Left ventricle myocardium inferior (tissue), 1 donor: ENCODE measurements at regions of chrX and their contacts with region 1.

Region 1: DNA sequence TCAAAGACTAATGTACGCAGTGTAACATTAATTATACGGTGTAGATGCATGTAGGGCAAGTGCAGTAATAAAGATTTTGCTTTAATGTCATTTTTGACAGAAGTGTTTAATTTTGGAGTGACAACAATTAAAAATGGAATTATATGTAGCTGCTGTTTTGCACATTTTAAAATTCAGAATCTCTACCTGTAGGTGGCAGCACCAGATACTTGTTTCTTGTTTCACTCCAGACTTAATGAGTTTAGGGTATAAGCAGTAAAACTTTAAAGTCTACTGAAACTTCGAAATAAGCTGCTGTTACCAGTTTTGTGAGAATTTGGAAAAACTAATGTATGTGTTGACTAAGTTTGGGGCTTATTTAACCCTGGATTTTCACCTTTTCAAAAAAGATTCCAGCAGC is 144.9 kb downstream of the POLA1 start:
- DNase-seq: no peak
- H3K4me3 ChIP-seq: no peak overlapping the region
- H3K27ac ChIP-seq: no peak overlapping the region
- H3K4me1 ChIP-seq: no peaks in the 10 kb centered on the region
- H3K27me3 ChIP-seq: no peaks in the 10 kb centered on the region
- CTCF ChIP-seq: peak; percentile 56

Region 2: GRCh38 chrX:25144043-25144940 is 305.7 kb after region 1 on chrX:
- intact Hi-C with region 1: loop called (anchors 5 kb)
- DNase-seq: peak; percentile 40
- H3K4me3 ChIP-seq: peak overlapping the region; percentile 17
- H3K27ac ChIP-seq: no peak overlapping the region
- H3K4me1 ChIP-seq: no peaks in the 10 kb centered on the region
- H3K27me3 ChIP-seq: peaks cover 5% of the 10 kb centered on the region
- CTCF ChIP-seq: peak; percentile 70